Pancreas (tissue), 10 donors: ENCODE measurements at regions of chr12 and their contacts with region 1.

Region 1: DNA sequence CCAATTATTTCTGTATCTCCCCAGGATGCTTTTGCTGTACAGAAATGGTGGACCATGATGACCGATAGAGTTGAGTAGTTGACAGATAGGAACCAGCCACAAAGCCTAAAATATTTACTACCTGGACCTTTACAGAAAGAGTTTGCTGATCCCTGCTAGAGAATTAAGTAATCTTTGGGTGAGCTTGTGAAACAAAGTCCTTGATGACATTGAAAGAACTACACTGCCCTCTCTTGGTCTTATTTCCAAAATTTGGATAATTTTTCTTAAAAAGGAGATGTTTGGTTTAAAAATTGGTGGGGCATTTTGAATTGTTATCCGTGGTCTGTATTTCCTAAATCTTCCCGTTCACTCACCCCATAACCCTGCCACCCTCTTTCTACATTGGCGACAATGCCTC is 13.7 kb upstream of the TCTN1 start:
- DNase-seq: no peak
- ATAC-seq: peak; percentile 62 to 82 (median 78)
- H3K4me3 ChIP-seq: no peak overlapping the region
- H3K27ac ChIP-seq: no peak overlapping the region
- H3K4me1 ChIP-seq: no peaks in the 10 kb centered on the region
- H3K27me3 ChIP-seq: no peaks in the 10 kb centered on the region
- CTCF ChIP-seq: peak in 1 of 4 donors; percentile 11

Region 2: GRCh38 chr12:110513842-110514241 is 86.4 kb before region 1 on chr12:
- intact Hi-C with region 1: loop called (anchors 5 to 10 kb)
- DNase-seq: no peak
- ATAC-seq: no peak
- H3K4me3 ChIP-seq: no peak overlapping the region
- H3K27ac ChIP-seq: no peak overlapping the region
- H3K4me1 ChIP-seq: no peaks in the 10 kb centered on the region
- H3K27me3 ChIP-seq: no peaks in the 10 kb centered on the region
- CTCF ChIP-seq: no peak

Region 3: DNA sequence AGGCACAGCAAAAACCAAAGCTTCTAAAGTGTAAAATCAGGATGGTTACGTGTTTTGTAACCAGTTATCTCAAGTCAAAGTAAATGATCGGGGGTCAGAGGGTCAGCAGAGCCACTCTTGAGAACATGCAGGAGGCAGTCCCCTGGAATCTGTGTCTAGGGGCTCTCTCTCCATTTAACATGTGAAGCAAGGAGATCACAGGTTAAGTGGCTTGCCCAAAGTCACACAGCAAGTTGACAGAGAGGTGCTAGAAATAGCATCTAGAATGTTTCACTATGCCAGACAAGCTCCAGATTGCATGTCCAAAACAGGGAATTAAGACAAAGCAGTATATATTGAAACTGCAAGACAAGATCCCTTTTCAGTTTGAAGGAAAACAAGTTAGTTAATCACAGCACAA is 50.5 kb before region 1 on chr12:
- intact Hi-C with region 1: loop called in 2 of 3 experiments (anchors 5 to 10 kb)
- DNase-seq: no peak
- ATAC-seq: no peak
- H3K4me3 ChIP-seq: no peak overlapping the region
- H3K27ac ChIP-seq: no peak overlapping the region
- H3K4me1 ChIP-seq: peaks cover 0 to 4% (median 0%) of the 10 kb centered on the region in 3 donors
- H3K27me3 ChIP-seq: no peaks in the 10 kb centered on the region
- CTCF ChIP-seq: no peak

Region 4: DNA sequence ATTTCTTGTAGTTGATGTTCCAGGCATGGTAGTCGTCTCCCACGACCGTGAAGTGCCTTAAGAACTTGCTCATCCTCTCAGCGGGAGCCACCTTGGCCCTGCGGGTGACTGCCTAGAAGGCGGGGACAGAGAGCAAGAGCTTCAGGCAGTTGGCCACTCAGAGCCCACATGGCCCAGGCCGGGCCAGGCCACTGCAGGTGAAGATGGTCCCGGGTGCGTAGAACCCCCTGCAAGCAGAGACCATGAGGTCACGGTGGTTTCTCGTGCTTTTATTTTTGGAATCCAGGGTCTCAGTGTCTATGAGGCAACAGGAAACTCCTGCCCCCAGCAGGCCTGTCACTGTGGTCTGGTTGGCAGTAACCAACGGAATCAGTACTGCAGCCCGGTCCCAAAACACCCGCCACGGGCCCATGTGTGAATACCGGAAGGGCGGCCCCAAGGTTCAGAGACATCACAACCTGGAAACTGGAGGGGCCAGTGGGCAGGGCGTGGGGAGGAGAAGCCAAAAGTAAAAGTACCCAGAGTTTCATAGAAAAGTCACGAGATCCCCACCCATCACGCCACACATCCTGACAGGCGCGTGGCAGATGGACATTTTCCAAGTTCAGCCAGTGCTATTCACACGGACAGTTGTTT is 61.2 kb after region 1 on chr12:
- intact Hi-C with region 1: no loop called
- DNase-seq: peak in 1 of 6 donors; percentile 24
- ATAC-seq: peak in 2 of 4 donors; percentile 20 to 52
- H3K4me3 ChIP-seq: no peak overlapping the region
- H3K27ac ChIP-seq: no peak overlapping the region
- H3K4me1 ChIP-seq: no peaks in the 10 kb centered on the region
- H3K27me3 ChIP-seq: no peaks in the 10 kb centered on the region
- CTCF ChIP-seq: no peak

Region 5: DNA sequence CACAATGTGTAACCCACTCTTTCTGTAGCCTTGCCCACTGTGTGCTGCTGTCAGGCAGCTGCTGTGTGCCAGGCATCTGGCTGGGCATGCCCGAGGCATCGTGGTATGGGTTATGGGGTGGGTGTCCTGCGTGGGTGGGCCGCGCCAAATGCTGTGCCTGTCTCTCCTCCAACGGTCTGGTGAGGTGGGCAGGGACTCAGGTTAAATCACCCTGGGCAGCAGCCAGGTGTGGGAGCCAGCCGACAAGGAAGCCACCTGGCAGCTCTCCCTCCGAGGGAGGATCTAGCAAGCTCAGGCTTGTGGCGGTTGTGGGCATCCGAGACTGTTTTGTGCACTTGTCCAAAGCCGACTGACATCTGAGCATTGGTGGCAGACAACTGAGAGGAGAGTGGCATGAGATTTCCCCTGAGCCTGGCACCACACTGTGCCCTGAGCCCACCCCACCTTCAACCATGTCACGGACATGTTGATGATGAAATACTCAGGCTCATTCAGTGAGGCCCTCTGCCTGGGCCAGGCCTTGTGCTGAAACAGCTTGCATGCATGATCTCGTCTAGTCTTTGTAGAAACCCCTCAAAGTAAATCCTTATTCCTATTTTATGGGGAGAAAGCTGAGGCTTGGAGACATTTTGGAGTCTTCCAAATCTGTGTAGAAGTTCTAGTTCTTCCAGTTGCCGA is 501.9 kb after region 1 on chr12:
- intact Hi-C with region 1: no loop called
- DNase-seq: no peak
- ATAC-seq: no peak
- H3K4me3 ChIP-seq: no peak overlapping the region
- H3K27ac ChIP-seq: no peak overlapping the region
- H3K4me1 ChIP-seq: no peaks in the 10 kb centered on the region
- H3K27me3 ChIP-seq: no peaks in the 10 kb centered on the region
- CTCF ChIP-seq: no peak